HepG2 (cell line): ENCODE measurements at regions of chr5 and their contacts with region 1.

Region 1: DNA sequence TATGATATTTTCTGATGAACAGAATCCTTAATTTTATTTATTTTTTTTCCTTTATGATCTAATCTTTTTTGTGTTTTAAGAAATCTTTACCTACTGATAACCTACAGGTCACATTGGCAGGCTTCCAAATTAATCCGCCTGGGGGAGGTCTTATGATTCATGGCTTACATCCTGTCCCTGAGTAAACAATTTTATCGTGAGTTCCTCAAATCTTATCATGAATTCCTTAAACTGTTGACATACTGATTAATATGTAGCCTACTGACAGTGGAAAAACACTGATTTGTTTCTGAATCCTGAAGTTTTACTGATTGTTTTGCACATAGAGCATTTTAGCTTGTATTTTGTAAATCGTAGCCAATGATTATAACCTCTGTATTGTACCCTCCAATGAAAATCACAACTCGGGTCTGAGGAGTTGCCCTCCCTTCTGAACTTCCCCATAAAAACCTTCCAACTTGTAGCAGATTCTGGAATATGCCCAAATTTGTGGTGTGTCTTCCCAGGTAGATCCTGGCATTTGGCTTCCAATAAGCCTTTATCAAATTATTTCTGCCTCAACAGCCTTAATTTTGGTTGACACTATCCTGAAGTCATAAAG is 105.6 kb downstream of the VCAN start:
- DNase-seq: peak; percentile 91
- ATAC-seq: peak; percentile 69
- H3K4me3 ChIP-seq: no peak overlapping the region; a peak in 1 of 6 replicates
- H3K27ac ChIP-seq: no peak overlapping the region
- H3K4me1 ChIP-seq: peaks cover 16% of the 10 kb centered on the region
- H3K27me3 ChIP-seq: peaks cover 0 to 4% of the 10 kb centered on the region in 2 experiments; a peak in 2 of 5 replicates
- CTCF ChIP-seq: no peak
- EP300 ChIP-seq: peak in 1 of 2 experiments; percentile 90; a peak in 2 of 4 replicates
- POLR2A ChIP-seq: no peak
- RAD21 ChIP-seq: no peak

Region 2: GRCh38 chr5:83095957-83096539 is 481.1 kb before region 1 on chr5:
- CTCF ChIA-PET with region 1: no interaction called
- POLR2A ChIA-PET with region 1: no interaction called
- in situ Hi-C with region 1: loop called (anchors 25 kb)
- intact Hi-C with region 1: loop called (anchors 1 kb)
- DNase-seq: peak; percentile 28
- ATAC-seq: peak; percentile 70
- H3K4me3 ChIP-seq: no peak overlapping the region
- H3K27ac ChIP-seq: no peak overlapping the region
- H3K4me1 ChIP-seq: peaks cover 22% of the 10 kb centered on the region
- H3K27me3 ChIP-seq: no peaks in the 10 kb centered on the region
- CTCF ChIP-seq: no peak
- EP300 ChIP-seq: no peak
- POLR2A ChIP-seq: no peak
- RAD21 ChIP-seq: no peak

Region 3: GRCh38 chr5:83220331-83220730 is 356.8 kb before region 1 on chr5:
- CTCF ChIA-PET with region 1: no interaction called
- POLR2A ChIA-PET with region 1: no interaction called
- in situ Hi-C with region 1: no loop called
- intact Hi-C with region 1: no loop called
- DNase-seq: no peak
- ATAC-seq: no peak
- H3K4me3 ChIP-seq: no peak overlapping the region
- H3K27ac ChIP-seq: no peak overlapping the region
- H3K4me1 ChIP-seq: no peaks in the 10 kb centered on the region
- H3K27me3 ChIP-seq: no peaks in the 10 kb centered on the region
- CTCF ChIP-seq: no peak
- EP300 ChIP-seq: no peak
- POLR2A ChIP-seq: no peak
- RAD21 ChIP-seq: no peak

Region 4: GRCh38 chr5:83540783-83541182 is 36.4 kb before region 1 on chr5:
- CTCF ChIA-PET with region 1: no interaction called
- POLR2A ChIA-PET with region 1: no interaction called
- in situ Hi-C with region 1: no loop called
- intact Hi-C with region 1: loop called (anchors 1 kb)
- DNase-seq: no peak
- ATAC-seq: no peak
- H3K4me3 ChIP-seq: no peak overlapping the region
- H3K27ac ChIP-seq: no peak overlapping the region
- H3K4me1 ChIP-seq: no peaks in the 10 kb centered on the region
- H3K27me3 ChIP-seq: peaks cover 0 to 4% of the 10 kb centered on the region in 2 experiments; a peak in 2 of 5 replicates
- CTCF ChIP-seq: no peak
- EP300 ChIP-seq: no peak
- POLR2A ChIP-seq: no peak
- RAD21 ChIP-seq: no peak